PC-9 (cell line): ENCODE measurements at regions of chr4 and their contacts with region 1.

Region 1: GRCh38 chr4:124334119-124334518 is 378.4 kb downstream of the ANKRD50 start:
- DNase-seq: peak; percentile 19 to 54
- H3K4me3 ChIP-seq: no peak overlapping the region
- H3K27ac ChIP-seq: no peak overlapping the region
- H3K4me1 ChIP-seq: no peaks in the 10 kb centered on the region
- H3K27me3 ChIP-seq: no peaks in the 10 kb centered on the region
- CTCF ChIP-seq: peak; percentile 78

Region 2: GRCh38 chr4:123443401-123444289 is 890.5 kb before region 1 on chr4:
- CTCF ChIA-PET with region 1: no interaction called
- POLR2A ChIA-PET with region 1: no interaction called
- intact Hi-C with region 1: no loop called
- DNase-seq: no peak
- H3K4me3 ChIP-seq: no peak overlapping the region
- H3K27ac ChIP-seq: no peak overlapping the region
- H3K4me1 ChIP-seq: no peaks in the 10 kb centered on the region
- H3K27me3 ChIP-seq: no peaks in the 10 kb centered on the region
- CTCF ChIP-seq: no peak

Region 3: DNA sequence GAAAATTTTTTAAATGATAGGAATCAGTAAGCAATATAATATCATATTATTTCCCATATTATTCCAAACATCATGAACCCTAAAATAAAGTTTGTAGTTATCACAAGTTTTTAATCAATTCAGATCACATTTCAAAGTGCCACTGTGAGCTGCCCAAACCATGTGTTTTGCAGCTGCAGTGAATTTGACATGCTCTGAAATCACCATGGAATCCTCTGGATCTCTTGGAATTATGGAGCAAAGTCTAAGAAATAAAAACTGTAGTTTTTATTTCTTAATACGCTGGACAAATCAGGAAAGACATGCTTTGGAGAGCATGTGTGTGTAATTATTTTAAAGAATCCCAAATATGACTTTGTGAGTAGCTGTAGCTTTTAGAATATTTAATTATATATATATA is 115.8 kb after region 1 on chr4:
- CTCF ChIA-PET with region 1: interaction called, 13 read pairs
- POLR2A ChIA-PET with region 1: no interaction called
- intact Hi-C with region 1: no loop called
- DNase-seq: no peak
- H3K4me3 ChIP-seq: no peak overlapping the region
- H3K27ac ChIP-seq: no peak overlapping the region
- H3K4me1 ChIP-seq: no peaks in the 10 kb centered on the region
- H3K27me3 ChIP-seq: no peaks in the 10 kb centered on the region
- CTCF ChIP-seq: no peak

Region 4: DNA sequence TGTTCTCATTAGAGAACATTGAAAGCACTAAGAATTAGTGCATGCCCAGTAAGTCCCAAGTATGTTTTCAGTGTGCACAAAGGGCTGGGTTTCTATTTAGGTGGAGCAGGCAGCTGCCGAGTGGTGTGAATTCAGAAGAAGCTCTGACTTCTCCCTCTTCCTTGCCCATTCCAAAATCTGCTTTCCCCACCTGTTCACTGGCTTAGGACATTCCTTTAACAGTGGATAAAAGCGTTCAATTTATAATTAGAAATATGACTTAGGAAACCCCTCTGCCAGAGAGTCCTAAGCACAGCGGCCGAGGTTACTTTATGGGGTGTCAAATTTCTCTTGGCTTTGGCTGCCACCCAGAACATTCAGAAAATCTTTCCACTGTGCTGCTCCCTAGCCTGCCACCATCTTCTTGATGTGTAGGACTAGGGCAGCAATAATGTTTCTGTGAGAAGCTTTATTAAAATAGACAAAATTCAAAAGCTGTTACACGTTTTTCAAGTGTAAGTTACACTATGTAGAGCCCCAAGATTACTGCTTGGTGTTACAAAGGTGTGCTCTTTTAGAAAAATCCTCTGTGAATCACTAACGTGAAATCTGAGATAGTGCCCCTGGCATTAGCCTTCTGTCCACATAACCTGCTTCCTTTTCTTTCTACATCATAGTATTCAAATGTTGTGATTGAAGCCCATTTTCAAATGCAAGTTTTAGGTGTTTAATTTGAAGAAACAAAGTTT is 570.0 kb after region 1 on chr4:
- CTCF ChIA-PET with region 1: no interaction called
- POLR2A ChIA-PET with region 1: no interaction called
- intact Hi-C with region 1: loop called (anchors 1 kb)
- DNase-seq: peak; percentile 54 to 68
- H3K4me3 ChIP-seq: peak overlapping the region; percentile 46
- H3K27ac ChIP-seq: peak overlapping the region; percentile 65
- H3K4me1 ChIP-seq: peaks cover 30% of the 10 kb centered on the region
- H3K27me3 ChIP-seq: no peaks in the 10 kb centered on the region
- CTCF ChIP-seq: no peak

Region 5: DNA sequence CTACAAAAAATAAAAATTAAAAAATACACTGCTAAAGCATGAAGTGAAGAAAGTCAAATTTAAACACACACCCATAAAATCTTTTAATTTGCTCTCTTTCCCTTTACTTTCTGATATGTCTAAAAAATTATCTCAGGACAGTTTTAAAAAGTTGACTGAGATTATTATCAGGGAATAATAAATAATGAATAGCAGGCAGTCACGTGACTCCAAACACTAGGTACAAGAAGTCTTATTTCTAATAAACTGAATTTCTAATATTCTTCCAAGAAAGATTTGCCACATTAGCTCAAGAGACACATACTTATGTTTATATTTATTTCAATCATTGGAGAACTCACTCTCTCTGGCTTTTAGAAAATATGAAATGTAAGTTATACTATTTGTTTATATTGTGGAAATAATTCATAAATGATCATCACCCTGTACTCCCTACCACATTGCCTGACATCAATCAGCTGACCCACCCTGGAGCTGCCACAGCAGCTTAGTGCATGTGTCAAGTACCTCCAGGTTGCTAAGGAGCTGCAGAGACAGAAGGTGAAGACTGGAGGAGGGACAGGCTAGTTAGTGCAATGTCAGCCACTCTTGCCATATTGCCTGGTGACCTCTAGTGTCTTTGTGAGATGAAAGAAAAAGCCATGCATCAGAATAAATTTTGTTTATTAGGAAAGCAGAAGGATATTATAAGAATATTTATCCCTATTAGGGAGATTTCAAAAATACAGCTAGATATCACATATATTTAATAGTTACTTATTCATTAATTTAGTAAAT is 736.6 kb after region 1 on chr4:
- CTCF ChIA-PET with region 1: no interaction called
- POLR2A ChIA-PET with region 1: no interaction called
- intact Hi-C with region 1: loop called (anchors 10 kb)
- DNase-seq: peak in 1 of 2 experiments; percentile 2
- H3K4me3 ChIP-seq: no peak overlapping the region
- H3K27ac ChIP-seq: no peak overlapping the region
- H3K4me1 ChIP-seq: no peaks in the 10 kb centered on the region
- H3K27me3 ChIP-seq: no peaks in the 10 kb centered on the region
- CTCF ChIP-seq: no peak

Region 6: DNA sequence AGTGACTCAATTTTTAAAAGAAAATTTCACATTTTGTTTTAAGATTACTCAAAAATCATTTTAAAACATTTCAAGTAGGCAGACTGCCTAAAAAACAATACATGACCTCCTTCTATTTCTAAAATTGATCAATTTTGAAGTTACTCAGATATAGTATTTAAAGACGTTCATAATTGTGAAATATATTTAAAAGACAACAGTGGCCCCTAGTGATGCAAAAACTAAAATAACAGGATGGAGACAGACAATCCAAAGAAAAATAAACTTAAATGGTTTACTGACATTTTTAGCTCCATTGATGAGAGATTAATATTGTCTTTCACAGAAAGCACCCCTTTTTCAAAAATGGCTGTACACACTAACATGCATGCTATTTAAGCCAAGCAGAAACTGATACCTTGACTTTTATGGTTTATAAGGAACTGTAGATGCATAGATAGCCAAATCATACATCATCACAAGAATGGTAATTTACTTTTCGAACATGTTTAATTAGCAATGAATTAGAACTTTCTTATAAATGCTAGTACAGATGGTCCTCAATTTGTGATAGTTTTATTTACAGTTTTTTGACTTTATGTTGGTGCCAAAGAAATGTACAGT is 910.8 kb after region 1 on chr4:
- CTCF ChIA-PET with region 1: no interaction called
- POLR2A ChIA-PET with region 1: no interaction called
- intact Hi-C with region 1: loop called (anchors 2 kb)
- DNase-seq: no peak
- H3K4me3 ChIP-seq: no peak overlapping the region
- H3K27ac ChIP-seq: no peak overlapping the region
- H3K4me1 ChIP-seq: no peaks in the 10 kb centered on the region
- H3K27me3 ChIP-seq: no peaks in the 10 kb centered on the region
- CTCF ChIP-seq: peak; percentile 73

Region 7: DNA sequence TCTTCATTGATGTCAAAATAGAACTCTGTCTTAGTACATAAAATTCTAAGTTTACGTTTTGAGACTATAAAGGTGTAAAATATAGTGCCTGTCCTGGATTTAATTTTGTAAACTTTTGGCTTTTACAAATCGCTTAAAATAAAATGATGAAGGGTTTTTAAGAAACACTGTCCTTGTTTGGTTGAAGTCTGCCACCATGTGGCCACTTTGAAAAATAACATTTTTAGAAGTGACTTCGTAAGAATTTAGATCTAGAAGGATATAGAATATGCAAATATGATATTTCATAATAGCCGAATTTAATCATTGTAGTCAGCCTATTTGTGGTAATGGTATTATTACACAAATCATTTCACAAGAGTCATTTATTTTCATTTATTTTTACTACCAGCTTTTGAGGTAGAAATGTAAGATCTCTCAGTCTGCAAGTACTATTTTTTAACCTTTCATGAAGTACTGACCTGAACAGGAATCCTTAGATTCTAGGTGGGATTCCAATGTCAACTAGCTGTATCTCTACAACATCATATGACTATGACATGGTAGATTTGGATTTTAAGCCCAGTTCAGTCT is 949.7 kb after region 1 on chr4:
- CTCF ChIA-PET with region 1: no interaction called
- POLR2A ChIA-PET with region 1: no interaction called
- intact Hi-C with region 1: loop called (anchors 1 kb)
- DNase-seq: peak in 1 of 2 experiments; percentile 60
- H3K4me3 ChIP-seq: no peak overlapping the region
- H3K27ac ChIP-seq: no peak overlapping the region
- H3K4me1 ChIP-seq: no peaks in the 10 kb centered on the region
- H3K27me3 ChIP-seq: no peaks in the 10 kb centered on the region
- CTCF ChIP-seq: peak; percentile 89